Activated T-helper 1 cell treated with anti-CD3 and anti-CD28 coated beads, Interleukin-12 subunit alpha, Interleukin-12 subunit beta, Interleukin-2, Interleukin-4 antibody, amounts not matched to agents 30 ng/mL and 10 ng/mL and 1 ng/mL, durations not matched to agents 14 hours and 24 hours and 36 hours (primary cell): ENCODE measurements at regions of chr4 and their contacts with region 1.

Region 1: DNA sequence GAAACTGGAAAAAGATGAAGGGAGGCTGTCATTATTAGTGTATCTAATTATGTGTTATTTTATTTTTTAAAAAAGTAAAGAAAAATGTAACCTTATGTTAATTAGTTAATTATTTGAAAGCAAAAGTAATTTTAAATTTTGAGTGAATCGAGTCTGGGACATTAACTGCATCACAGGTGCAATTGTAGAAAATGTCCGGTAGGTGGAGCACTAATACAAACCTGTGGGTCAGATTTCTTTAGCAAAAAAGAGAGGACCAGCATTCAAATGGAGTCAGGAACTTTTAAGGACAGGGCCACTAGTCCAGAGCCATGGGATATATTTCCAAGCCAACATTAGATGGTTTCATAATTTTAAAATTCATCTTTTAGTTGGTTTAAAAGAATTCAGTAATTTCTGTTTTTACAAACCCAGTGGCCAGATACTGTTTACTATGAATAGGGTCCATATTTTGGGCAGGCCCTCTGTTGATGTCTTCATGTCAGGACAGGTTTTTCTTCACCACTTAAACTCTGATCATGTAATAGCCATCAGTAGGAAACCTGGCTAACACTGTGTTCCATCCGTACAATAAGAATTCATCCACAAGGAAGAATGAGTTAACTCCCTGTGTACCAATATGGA is 27.2 kb downstream of the BST1 start:
- DNase-seq: peak; percentile 16
- H3K4me3 Mint-ChIP-seq: no peak overlapping the region
- H3K27ac Mint-ChIP-seq: no peak overlapping the region
- H3K4me1 Mint-ChIP-seq: peaks cover 29% of the 10 kb centered on the region
- H3K27me3 Mint-ChIP-seq: peaks cover 3% of the 10 kb centered on the region

Region 2: GRCh38 chr4:15479089-15479912 is 250.7 kb before region 1 on chr4:
- intact Hi-C with region 1: loop called (anchors 1 kb)
- DNase-seq: no peak
- H3K4me3 Mint-ChIP-seq: no peak overlapping the region
- H3K27ac Mint-ChIP-seq: no peak overlapping the region
- H3K4me1 Mint-ChIP-seq: no peaks in the 10 kb centered on the region
- H3K27me3 Mint-ChIP-seq: no peaks in the 10 kb centered on the region

Region 3: GRCh38 chr4:15562114-15562513 is 167.9 kb before region 1 on chr4:
- intact Hi-C with region 1: no loop called
- DNase-seq: no peak
- H3K4me3 Mint-ChIP-seq: no peak overlapping the region
- H3K27ac Mint-ChIP-seq: no peak overlapping the region
- H3K4me1 Mint-ChIP-seq: no peaks in the 10 kb centered on the region
- H3K27me3 Mint-ChIP-seq: no peaks in the 10 kb centered on the region

Region 4: GRCh38 chr4:15778289-15779241 is 48.5 kb after region 1 on chr4 and contains the start of gene CD38:
- intact Hi-C with region 1: loop called (anchors 1 kb)
- DNase-seq: peak; percentile 64
- H3K4me3 Mint-ChIP-seq: peak within 1 kb of the TSS; percentile 93
- H3K27ac Mint-ChIP-seq: peak within 1 kb of the TSS; percentile 92
- H3K4me1 Mint-ChIP-seq: peaks cover 86% of the 10 kb centered on the region
- H3K27me3 Mint-ChIP-seq: no peaks in the 10 kb centered on the region
- total RNA-seq, gene CD38: 148 and 152 TPM in 2 replicates

Region 5: DNA sequence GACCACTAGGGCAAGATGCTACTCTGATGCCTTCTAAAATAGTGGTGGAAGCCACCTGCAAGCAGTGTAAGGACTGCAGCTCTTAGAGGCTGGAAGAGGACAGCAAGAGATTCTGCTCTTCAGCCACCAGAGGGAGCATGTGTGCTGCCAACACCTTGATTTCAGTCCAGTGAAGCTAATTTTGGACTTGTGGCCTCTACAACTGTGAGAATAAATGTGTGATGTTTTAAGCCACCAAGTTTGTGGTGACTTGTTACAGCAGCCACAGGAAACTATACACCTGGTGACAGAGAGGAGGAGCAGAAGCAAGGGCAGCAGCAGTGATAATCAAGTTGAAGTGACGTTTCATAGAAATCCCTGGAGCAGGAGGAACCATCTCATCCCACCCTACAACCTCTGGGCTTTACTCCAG is 152.7 kb after region 1 on chr4:
- intact Hi-C with region 1: loop called (anchors 1 kb)
- DNase-seq: peak; percentile 11
- H3K4me3 Mint-ChIP-seq: no peak overlapping the region
- H3K27ac Mint-ChIP-seq: no peak overlapping the region
- H3K4me1 Mint-ChIP-seq: no peaks in the 10 kb centered on the region
- H3K27me3 Mint-ChIP-seq: peaks cover 8% of the 10 kb centered on the region

Region 6: DNA sequence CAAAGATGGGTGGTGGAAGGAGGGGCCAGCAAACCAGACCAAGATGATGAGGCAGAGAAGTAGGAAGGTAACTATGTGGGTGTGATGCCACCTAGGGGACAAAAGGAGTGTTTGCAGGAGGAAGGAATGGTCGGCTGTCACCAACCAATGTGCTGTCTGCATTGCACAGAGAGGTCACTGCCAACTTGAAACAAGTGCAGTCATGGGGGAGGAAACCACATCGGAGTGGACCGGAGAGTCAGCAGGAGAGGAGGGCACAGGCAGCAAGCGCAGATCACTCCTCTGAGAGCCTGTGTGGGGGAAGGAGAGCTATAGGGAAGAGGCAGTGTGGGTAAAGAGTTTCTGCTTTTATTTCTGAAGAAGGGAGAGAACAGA is 271.4 kb after region 1 on chr4:
- intact Hi-C with region 1: loop called (anchors 1 kb)
- DNase-seq: peak; percentile 27
- H3K4me3 Mint-ChIP-seq: no peak overlapping the region
- H3K27ac Mint-ChIP-seq: no peak overlapping the region
- H3K4me1 Mint-ChIP-seq: no peaks in the 10 kb centered on the region
- H3K27me3 Mint-ChIP-seq: peaks cover 11% of the 10 kb centered on the region